ENCODE measurements at regions of chr22 and their contacts with region 1.

Region 1: DNA sequence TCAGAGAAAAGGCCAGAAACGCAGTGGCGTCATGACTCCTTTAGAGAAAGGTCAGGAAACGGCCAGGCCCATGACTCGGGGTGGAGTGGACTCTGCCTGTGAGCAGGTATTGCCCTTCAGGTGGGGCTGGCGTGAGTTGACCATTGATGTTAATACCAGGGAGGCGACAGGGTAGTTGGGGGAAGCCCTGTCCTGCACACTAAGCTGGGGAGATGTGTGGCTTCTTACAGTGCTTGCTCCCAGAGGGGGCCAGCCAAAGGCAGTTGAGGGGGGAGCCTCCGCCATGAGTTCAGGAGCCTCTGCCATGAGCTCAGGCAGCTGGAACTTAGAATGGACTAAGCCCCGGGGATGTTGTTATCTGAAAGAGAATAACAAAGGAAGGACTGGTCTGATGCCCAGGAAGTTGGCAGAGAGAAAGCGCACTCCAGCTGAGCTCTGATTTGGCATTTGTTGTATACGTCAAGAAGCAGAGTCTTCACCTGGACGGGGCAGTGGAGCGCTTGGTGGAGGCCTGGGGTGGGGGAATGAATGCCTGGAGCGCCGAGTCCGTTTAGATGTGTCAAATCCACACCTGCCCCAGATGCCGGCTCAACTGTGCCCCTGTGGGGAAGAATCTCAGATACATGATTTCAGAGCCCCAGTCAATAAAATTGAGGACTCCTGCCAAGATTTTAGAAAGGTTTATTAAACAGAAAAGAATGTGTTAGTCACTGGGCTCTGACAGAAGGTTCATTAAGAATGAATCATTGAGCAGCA is 222.5 kb downstream of the TBC1D22A start:
- DNase-seq: no peak
- ATAC-seq: no peak
- H3K4me3 ChIP-seq: no peak overlapping the region
- H3K27ac ChIP-seq: no peak overlapping the region
- H3K4me1 ChIP-seq: no peaks in the 10 kb centered on the region
- H3K27me3 ChIP-seq: no peaks in the 10 kb centered on the region

Region 2: GRCh38 chr22:46829941-46830715 is 154.8 kb before region 1 on chr22:
- intact Hi-C with region 1: loop called in 1 of 2 experiments (anchors 10 kb)
- DNase-seq: peak; percentile 76 to 89
- ATAC-seq: peak; percentile 51
- H3K4me3 ChIP-seq: no peak overlapping the region
- H3K27ac ChIP-seq: peak overlapping the region in 1 of 2 donors; percentile 53
- H3K4me1 ChIP-seq: no peaks in the 10 kb centered on the region
- H3K27me3 ChIP-seq: no peaks in the 10 kb centered on the region

Measured in aorta (tissue), 5 donors.